ENCODE measurements at regions of chr5 and their contacts with region 1.

Region 1: DNA sequence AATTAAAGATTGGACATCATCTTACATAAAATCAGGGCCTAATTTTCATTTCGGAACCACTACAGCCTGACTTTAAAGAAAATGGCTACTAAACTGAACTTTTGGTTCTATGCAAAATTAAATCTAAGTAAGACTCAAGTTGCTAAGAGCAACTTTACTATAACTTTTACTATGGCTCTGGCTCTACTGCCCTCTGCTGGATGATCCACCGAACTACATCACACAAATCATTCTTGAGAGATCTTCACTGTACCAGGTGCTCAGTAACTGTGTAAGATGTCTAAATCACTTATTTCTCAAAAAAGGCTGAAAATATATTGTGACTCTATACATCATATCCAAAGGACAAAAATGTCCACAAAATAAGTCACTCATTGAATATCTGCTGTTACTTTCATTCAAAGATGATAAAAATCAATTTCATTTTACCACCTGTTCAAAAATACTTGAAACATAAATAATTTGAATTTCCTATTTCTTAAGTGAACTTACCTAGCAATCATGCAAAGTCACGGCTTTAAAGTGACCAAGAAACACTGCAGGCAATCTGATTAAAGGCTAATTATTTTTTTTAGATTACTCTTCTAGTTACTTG is 13.5 kb downstream of the MOCS2 start:
- DNase-seq: peak; percentile 32 to 83
- ATAC-seq: peak; percentile 87 to 93 (median 93)
- H3K4me3 ChIP-seq: no peak overlapping the region
- H3K4me3 Mint-ChIP-seq: no peak overlapping the region
- H3K27ac ChIP-seq: no peak overlapping the region
- H3K27ac Mint-ChIP-seq: no peak overlapping the region
- H3K4me1 ChIP-seq: no peaks in the 10 kb centered on the region
- H3K4me1 Mint-ChIP-seq: no peaks in the 10 kb centered on the region
- H3K27me3 ChIP-seq: no peaks in the 10 kb centered on the region
- H3K27me3 Mint-ChIP-seq: no peaks in the 10 kb centered on the region
- CTCF ChIP-seq: peak; percentile 93

Region 2: DNA sequence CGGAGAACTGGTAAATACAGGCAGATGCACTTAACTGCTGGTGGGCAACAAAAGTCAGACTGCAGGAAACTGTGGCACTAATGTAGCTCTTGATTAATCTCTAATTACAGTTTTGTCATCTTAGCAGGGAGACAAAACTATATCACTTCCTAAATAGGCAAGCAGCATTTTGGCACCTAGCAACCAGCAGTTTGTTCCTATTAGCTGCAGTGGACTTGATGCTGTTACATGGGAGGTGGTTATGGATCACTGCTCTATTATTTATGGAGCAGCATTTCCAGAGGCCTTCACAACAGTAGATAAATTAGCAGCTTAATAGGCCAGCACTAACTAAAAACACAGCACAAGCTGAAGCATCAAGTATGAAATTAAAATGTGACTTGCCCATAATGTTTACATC is 826.6 kb before region 1 on chr5:
- intact Hi-C with region 1: no loop called
- DNase-seq: no peak
- ATAC-seq: no peak
- H3K4me3 ChIP-seq: no peak overlapping the region
- H3K4me3 Mint-ChIP-seq: no peak overlapping the region
- H3K27ac ChIP-seq: no peak overlapping the region
- H3K27ac Mint-ChIP-seq: no peak overlapping the region
- H3K4me1 ChIP-seq: no peaks in the 10 kb centered on the region
- H3K4me1 Mint-ChIP-seq: no peaks in the 10 kb centered on the region
- H3K27me3 ChIP-seq: no peaks in the 10 kb centered on the region
- H3K27me3 Mint-ChIP-seq: no peaks in the 10 kb centered on the region
- CTCF ChIP-seq: no peak

Region 3: DNA sequence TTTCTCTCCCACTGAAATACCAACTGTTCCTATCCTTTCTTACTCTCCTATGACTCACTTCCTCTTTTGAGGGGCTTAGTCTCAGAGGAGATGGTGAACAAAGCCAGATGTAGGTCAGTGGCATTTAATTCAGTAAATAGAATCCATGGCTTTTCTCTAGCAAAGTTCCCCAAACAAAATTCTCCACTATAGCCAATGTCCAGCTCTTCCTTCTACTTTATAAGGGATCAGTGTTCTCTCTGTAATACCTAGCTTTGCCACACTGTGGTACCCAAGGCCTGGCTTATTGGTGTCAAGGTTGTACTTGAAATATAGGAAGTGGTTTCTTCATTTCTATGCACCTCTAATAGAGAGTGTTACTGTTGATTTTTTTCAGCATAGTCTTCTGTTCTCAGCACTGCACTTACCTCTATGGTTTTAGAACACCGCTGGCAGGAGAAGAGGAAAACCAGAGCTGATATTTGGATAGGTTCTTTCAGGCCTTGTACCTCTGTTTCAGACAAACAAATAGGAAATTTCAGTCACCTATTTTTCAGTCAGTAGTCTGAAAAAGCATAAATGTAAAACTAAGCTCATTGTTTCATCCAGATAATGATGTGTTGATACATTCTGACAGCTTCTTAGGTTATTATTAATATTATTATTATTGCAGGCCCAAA is 147.5 kb before region 1 on chr5:
- intact Hi-C with region 1: loop called (anchors 1 kb)
- DNase-seq: peak in 1 of 2 donors; percentile 79
- ATAC-seq: peak; percentile 97 to 99 (median 98)
- H3K4me3 ChIP-seq: no peak overlapping the region
- H3K4me3 Mint-ChIP-seq: no peak overlapping the region
- H3K27ac ChIP-seq: no peak overlapping the region
- H3K27ac Mint-ChIP-seq: peak overlapping the region in 1 of 2 donors; percentile 48
- H3K4me1 ChIP-seq: no peaks in the 10 kb centered on the region
- H3K4me1 Mint-ChIP-seq: peaks cover 7 to 19% of the 10 kb centered on the region in 2 donors
- H3K27me3 ChIP-seq: no peaks in the 10 kb centered on the region
- H3K27me3 Mint-ChIP-seq: no peaks in the 10 kb centered on the region
- CTCF ChIP-seq: peak; percentile 80

Region 4: GRCh38 chr5:53123702-53124101 is 27.7 kb after region 1 on chr5:
- intact Hi-C with region 1: no loop called
- DNase-seq: no peak
- ATAC-seq: no peak
- H3K4me3 ChIP-seq: no peak overlapping the region
- H3K4me3 Mint-ChIP-seq: no peak overlapping the region
- H3K27ac ChIP-seq: no peak overlapping the region
- H3K27ac Mint-ChIP-seq: no peak overlapping the region
- H3K4me1 ChIP-seq: no peaks in the 10 kb centered on the region
- H3K4me1 Mint-ChIP-seq: no peaks in the 10 kb centered on the region
- H3K27me3 ChIP-seq: no peaks in the 10 kb centered on the region
- H3K27me3 Mint-ChIP-seq: peaks cover 9 to 15% of the 10 kb centered on the region in 2 donors
- CTCF ChIP-seq: no peak

Measured in natural killer cell (primary cell).